PC-3 (cell line): ENCODE measurements at regions of chr14 and their contacts with region 1.

Region 1: GRCh38 chr14:95561001-95561412 is 26.2 kb downstream of the GLRX5 start:
- DNase-seq: peak; percentile 90
- ATAC-seq: peak; percentile 96
- H3K4me3 ChIP-seq: no peak overlapping the region
- H3K27ac ChIP-seq: no peak overlapping the region
- H3K4me1 ChIP-seq: no peaks in the 10 kb centered on the region
- H3K27me3 ChIP-seq: no peaks in the 10 kb centered on the region
- CTCF ChIP-seq: peak; percentile 97

Region 2: GRCh38 chr14:95609387-95609990 is 48.5 kb after region 1 on chr14:
- CTCF ChIA-PET with region 1: no interaction called
- POLR2A ChIA-PET with region 1: no interaction called
- intact Hi-C with region 1: loop called (anchors 2 kb)
- DNase-seq: peak; percentile 56
- ATAC-seq: peak; percentile 37; the same call in 1 of the 2 replicates
- H3K4me3 ChIP-seq: no peak overlapping the region
- H3K27ac ChIP-seq: no peak overlapping the region
- H3K4me1 ChIP-seq: no peaks in the 10 kb centered on the region
- H3K27me3 ChIP-seq: peaks cover 93% of the 10 kb centered on the region
- CTCF ChIP-seq: peak; percentile 70

Region 3: GRCh38 chr14:95623195-95623594 is 62.2 kb after region 1 on chr14:
- CTCF ChIA-PET with region 1: no interaction called
- POLR2A ChIA-PET with region 1: no interaction called
- intact Hi-C with region 1: no loop called
- DNase-seq: no peak
- ATAC-seq: no peak
- H3K4me3 ChIP-seq: no peak overlapping the region
- H3K27ac ChIP-seq: no peak overlapping the region
- H3K4me1 ChIP-seq: no peaks in the 10 kb centered on the region
- H3K27me3 ChIP-seq: no peaks in the 10 kb centered on the region
- CTCF ChIP-seq: no peak

Region 4: GRCh38 chr14:95635060-95635459 is 74.1 kb after region 1 on chr14:
- CTCF ChIA-PET with region 1: no interaction called
- POLR2A ChIA-PET with region 1: no interaction called
- intact Hi-C with region 1: no loop called
- DNase-seq: no peak
- ATAC-seq: no peak
- H3K4me3 ChIP-seq: no peak overlapping the region
- H3K27ac ChIP-seq: no peak overlapping the region
- H3K4me1 ChIP-seq: no peaks in the 10 kb centered on the region
- H3K27me3 ChIP-seq: no peaks in the 10 kb centered on the region
- CTCF ChIP-seq: no peak

Region 5: GRCh38 chr14:95993768-95994592 is 433.0 kb after region 1 on chr14:
- CTCF ChIA-PET with region 1: no interaction called
- POLR2A ChIA-PET with region 1: no interaction called
- intact Hi-C with region 1: loop called (anchors 1 kb)
- DNase-seq: peak; percentile 49
- ATAC-seq: no peak
- H3K4me3 ChIP-seq: no peak overlapping the region
- H3K27ac ChIP-seq: no peak overlapping the region
- H3K4me1 ChIP-seq: no peaks in the 10 kb centered on the region
- H3K27me3 ChIP-seq: no peaks in the 10 kb centered on the region
- CTCF ChIP-seq: peak; percentile 80

Region 6: GRCh38 chr14:96275177-96276112 is 714.4 kb after region 1 on chr14:
- CTCF ChIA-PET with region 1: no interaction called
- POLR2A ChIA-PET with region 1: no interaction called
- intact Hi-C with region 1: loop called (anchors 1 kb)
- DNase-seq: peak; percentile 60
- ATAC-seq: peak; percentile 74
- H3K4me3 ChIP-seq: no peak overlapping the region
- H3K27ac ChIP-seq: no peak overlapping the region
- H3K4me1 ChIP-seq: no peaks in the 10 kb centered on the region
- H3K27me3 ChIP-seq: no peaks in the 10 kb centered on the region
- CTCF ChIP-seq: peak; percentile 93